GM18951 (cell line): ENCODE measurements at regions of chr7 and their contacts with region 1.

Region 1: DNA sequence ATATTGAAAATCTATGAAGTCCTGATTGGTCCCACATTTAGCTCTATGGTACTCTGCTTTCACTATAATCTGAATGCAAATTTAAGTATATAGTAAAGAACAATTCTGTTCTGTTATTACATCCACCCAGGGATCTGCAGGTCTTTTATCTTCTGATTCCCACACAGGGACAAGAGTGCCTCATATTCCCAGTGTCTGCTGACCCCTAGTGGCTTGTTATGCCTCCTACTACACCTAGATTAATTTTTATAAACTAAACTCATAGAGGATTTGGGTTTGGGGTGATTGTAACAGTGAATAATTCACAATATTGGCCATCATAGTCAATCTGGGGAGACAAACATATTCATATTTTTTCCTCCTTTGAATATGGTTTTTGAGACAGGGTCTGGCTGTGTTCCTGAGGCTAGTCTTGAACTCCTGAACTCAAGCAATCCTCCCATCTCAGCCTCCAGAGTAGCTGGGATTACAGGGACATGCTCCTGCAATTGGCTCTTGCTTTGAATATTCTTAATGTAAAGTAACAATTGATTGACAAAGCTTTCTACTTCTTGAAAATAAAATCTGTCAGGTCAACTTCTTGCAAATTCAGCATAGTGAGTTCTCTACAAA is 282.1 kb downstream of the KCND2 start:
- POLR2A ChIP-seq: no peak

Region 2: GRCh38 chr7:119270045-119270464 is 1285.0 kb before region 1 on chr7:
- in situ Hi-C with region 1: loop called (anchors 25 kb)
- POLR2A ChIP-seq: no peak

Region 3: DNA sequence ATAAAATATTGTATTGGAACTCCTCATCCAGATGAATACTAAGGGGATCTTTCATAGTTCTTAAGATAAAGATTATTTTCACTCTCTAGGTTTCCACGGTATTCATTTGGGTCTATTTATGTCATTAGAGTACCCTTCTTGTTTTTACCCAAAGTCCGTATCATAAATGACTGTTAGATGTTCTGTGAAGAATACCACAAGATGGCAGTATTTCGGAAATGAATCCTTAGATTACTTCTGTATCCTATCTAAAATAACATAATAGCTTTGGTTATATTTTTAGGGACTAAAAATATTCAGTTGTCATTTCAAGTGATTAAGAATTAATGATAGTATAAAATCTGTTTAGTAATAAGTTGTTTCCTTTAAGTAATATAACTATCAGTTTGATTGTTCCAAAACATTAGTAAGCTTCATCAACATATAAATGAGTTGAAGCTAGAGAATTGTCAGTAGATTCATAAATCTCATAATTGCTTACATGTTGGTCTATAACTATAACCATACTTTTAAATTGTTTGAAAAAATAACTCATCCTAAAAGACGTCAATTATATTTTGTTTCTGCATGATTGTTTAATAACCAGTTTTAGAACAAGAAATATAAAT is 619.5 kb before region 1 on chr7:
- in situ Hi-C with region 1: loop called (anchors 25 kb)
- POLR2A ChIP-seq: no peak

Region 4: DNA sequence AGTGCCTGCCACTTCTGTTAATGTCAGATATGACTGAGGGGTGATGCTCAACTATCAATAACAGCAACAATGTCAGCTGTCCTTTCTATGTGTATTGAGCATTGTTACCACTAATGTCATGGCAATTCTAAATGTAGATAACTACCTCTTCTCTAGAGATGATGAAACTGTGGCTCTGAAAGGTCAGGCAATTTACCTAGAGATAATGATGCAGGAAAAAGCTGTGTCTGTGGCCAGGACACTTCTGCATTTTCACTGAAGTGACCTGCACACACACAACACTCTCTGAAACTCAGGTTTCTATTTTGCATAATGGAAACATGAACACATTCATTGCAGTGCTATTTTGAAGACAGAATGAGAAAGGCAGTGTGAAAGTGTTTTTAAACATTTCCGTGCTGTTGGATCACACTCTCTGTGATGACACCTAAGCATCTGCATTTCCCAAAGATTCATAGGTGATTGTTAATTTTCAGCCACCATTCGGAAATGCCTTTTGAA is 133.9 kb before region 1 on chr7:
- in situ Hi-C with region 1: no loop called
- POLR2A ChIP-seq: no peak